Right ventricle myocardium superior (tissue), 1 donor: ENCODE measurements at regions of chr10 and their contacts with region 1.

Region 1: DNA sequence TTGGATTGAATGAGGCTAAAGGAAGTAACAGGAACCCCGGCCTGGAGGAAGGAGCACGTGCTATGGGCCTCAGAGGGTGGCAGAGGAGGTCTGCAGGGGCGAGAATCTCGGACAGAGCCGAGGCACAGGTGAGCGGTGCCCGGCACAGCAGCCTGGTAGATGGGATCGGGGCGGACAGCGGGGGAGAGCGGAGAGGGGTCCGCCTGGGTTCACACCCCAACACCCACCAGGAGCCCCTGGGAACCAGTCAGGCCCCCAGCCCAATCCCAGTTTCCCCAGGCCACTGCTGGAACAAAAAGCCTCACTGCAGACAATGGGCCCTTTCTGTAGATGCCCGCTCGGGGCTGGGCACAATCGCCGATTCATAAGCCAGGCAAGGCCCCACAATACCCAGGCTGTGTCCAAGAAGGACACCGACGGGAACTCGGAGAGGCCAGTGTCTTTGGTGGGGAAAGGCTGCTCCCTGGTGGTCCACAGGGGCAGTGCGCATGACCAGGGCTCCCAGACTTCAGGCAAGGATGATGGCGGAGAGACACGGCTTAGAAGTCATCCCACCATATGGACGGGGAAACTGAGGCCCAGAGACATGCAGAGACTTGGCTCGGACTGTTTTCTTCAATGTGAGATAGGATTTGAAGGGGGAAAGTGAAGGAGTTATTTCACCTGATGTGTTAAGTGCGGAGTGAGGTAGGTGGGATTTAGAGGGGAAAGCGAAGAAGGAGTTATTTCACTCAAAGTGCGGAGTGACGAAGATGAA is 106.9 kb upstream of the GPR26 start:
- DNase-seq: peak; percentile 67
- ATAC-seq: peak; percentile 81

Region 2: GRCh38 chr10:123043409-123043925 is 515.8 kb before region 1 on chr10:
- intact Hi-C with region 1: loop called (anchors 5 kb)
- DNase-seq: no peak
- ATAC-seq: peak; percentile 64

Region 3: GRCh38 chr10:123132576-123133477 is 426.4 kb before region 1 on chr10:
- intact Hi-C with region 1: loop called (anchors 5 kb)
- DNase-seq: peak; percentile 87
- ATAC-seq: peak; percentile 94

Region 4: DNA sequence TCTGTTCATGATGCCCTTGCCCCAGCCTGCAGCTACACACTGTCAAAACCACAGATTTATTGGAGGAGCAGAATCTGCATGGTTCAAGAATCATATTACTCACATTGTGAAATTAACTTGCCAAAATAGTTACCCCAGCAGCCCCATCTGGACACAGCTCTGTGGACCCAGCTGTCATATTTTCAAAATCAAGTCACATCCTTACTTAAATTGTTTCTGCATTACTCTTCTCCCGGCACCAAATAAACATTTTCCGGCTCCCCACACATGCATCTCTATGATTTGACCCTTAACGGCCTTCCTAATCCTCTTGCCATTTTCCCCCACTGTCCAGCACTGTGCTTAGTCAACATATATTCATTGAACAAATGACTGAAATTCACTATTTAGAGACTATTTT is 63.1 kb after region 1 on chr10:
- intact Hi-C with region 1: no loop called
- DNase-seq: no peak
- ATAC-seq: no peak

Region 5: DNA sequence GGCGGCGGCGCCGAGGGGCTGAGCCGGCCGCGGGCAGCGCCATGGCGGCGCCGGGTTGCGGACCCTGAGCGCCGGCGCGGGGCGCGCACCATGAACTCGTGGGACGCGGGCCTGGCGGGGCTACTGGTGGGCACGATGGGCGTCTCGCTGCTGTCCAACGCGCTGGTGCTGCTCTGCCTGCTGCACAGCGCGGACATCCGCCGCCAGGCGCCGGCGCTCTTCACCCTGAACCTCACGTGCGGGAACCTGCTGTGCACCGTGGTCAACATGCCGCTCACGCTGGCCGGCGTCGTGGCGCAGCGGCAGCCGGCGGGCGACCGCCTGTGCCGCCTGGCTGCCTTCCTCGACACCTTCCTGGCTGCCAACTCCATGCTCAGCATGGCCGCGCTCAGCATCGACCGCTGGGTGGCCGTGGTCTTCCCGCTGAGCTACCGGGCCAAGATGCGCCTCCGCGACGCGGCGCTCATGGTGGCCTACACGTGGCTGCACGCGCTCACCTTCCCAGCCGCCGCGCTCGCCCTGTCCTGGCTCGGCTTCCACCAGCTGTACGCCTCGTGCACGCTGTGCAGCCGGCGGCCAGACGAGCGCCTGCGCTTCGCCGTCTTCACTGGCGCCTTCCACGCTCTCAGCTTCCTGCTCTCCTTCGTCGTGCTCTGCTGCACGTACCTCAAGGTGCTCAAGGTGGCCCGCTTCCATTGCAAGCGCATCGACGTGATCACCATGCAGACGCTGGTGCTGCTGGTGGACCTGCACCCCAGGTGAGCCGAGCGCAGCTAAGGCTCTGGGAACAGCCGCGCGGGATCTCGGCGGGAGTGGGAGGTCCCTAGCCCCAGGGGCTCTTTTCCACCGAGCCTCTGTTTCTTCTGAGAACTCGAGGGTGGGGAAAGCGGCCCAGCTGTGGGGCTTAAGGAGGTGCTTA is 107.3 kb after region 1 on chr10 and contains the start of gene GPR26:
- intact Hi-C with region 1: no loop called
- DNase-seq: no peak
- ATAC-seq: no peak
- total RNA-seq, gene GPR26: not detected